Cardiac septum (tissue), 1 donor: ENCODE measurements at regions of chr21 and their contacts with region 1.

Region 1: GRCh38 chr21:37711836-37712568 is 204.3 kb downstream of the KCNJ6 start:
- DNase-seq: peak; percentile 83

Region 2: DNA sequence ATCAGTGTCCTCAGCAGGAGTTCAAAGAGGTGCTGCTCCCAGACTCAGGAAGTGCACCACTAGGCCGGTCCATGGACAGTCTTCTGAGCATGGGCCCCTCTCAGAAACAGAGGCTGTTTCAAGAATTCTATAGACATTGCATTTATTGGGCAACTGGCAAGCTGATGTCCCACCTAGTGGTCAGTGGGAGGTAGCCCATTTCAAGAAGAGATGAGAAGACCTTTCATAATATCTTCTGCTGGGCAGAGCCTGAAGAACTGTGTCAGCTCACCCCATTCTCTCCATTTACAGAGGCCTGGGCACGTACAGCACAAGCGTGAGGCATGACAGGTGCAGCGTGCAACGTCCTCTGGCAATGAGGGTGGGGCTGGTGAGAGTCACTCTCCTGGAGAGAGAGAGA is 129.4 kb before region 1 on chr21:
- intact Hi-C with region 1: no loop called
- DNase-seq: no peak

Region 3: DNA sequence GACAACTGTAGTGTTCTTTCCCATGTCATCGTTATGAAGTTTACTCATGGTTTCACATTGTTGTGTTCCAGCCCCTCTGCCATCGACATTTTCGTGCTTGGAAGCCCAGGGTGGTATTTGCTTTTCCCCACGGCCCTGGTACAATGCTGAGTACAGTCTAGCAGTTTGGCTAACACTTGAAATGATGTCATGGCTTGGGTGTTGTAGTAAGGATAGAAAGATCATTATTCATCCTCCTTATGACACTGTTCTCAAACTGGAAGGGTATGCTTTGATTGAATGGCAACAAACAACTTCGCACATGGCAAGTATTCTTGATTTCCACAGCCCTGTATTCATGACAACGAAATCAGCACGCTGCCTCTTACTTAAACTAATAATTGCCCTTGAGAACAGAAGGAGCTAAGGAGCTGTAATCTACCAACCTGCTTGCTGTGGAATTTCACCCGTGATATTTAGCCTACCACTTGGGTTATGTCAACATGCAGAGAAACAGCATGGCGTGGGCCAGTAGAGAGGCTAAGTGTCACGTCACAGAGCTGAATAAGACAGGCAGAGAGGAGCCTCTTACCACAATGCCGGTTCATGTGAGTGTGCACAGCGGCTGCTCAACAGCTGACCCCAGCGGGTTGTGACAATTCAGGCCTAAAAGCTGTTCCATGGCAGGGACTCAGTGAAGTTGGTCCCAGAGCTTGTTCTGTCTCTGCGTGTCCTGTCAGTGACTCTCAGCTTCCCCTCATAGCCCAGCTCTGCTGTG is 130.3 kb after region 1 on chr21:
- intact Hi-C with region 1: no loop called
- DNase-seq: no peak

Region 4: GRCh38 chr21:37916310-37917051 is 204.5 kb after region 1 on chr21 and contains the start of gene KCNJ6:
- intact Hi-C with region 1: loop called (anchors 5 kb)
- DNase-seq: no peak
- total RNA-seq, gene KCNJ6: not detected

Region 5: DNA sequence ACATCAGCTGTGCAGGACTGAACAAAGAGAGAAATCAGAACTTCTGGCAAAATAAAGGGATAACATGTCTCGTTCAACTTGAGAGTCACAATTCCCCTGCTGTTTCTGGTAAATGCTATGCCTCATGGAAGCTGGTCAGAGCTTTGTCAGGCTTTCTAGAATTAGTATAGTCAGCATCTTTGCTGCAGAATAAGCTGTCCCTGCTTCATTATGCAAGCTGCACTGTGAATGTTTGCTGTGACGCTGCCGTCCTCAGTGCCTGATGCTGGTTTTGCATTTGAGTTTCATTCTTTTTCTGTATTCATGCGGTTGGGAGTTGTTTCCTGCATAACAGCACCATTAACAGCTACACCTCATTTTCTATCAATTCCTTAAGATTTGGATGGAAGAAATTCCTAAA is 300.7 kb after region 1 on chr21:
- intact Hi-C with region 1: no loop called
- DNase-seq: no peak

Region 6: GRCh38 chr21:38126669-38127303 is 414.8 kb after region 1 on chr21:
- intact Hi-C with region 1: loop called (anchors 5 kb)
- DNase-seq: no peak